ENCODE measurements at regions of chr5 and their contacts with region 1.

Region 1: DNA sequence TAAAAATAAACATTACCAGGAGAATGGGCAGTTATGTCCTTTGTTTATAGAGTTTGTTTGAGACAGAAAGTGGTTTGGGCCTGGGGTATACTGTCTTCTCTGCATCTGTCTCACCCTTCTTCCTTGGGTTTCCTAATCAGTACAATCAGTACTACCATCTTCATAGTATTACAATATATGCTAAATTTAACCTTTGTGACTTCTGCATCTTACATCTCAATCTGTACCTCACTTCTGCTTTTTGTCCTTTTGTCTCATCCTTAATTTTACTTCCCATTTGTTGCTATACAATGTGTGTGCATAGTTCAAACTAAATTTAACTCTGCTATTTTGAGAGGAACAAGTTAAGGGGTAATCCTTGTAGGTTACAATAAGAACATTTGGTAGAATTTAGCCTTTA is 19.6 kb downstream of the FBXO38 start:
- DNase-seq: no peak
- ATAC-seq: peak; percentile 72
- H3K4me3 ChIP-seq: no peak overlapping the region
- H3K27ac ChIP-seq: no peak overlapping the region
- H3K4me1 ChIP-seq: peaks cover 7% of the 10 kb centered on the region
- H3K27me3 ChIP-seq: no peaks in the 10 kb centered on the region
- CTCF ChIP-seq: no peak
- EP300 ChIP-seq: no peak
- POLR2A ChIP-seq: no peak
- RAD21 ChIP-seq: no peak

Region 2: DNA sequence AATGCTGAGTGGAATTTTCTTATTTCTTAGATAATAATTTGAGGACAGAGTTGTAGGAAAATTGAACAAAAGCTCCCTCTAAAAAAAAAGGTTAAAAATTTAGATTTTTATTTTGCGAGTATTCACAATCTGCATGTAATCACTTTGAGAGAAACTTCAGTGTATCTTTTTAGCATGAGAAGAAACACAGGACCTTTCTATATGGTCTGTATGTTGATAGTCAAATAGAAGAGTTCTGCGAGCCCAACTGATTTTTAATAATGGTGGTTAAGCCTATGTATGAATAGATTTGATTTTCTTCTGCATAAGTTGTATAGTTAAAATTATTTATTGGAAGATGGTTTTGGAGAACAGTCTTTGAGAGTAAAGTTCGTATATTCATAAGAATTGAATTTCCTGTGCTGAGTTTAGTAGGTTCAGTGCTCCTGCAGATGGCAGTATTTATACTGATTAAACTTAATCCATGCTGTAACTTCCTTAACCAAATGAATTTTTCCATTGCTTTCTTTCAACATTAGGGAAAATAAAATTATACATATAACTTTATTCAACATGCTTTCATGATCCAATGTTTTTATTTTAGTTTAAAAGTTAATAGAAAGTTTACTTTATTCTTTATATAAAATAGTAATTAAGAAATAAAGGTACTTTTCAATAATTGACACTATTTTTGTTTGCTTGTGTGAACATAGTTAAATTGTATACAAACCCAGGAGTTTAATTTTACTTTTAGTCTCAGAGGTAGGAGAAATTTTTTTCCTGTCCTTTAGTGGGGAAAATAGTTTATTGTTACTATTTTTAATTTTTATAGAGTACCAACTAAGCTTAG is 1936.6 kb before region 1 on chr5:
- CTCF ChIA-PET with region 1: no interaction called
- POLR2A ChIA-PET with region 1: no interaction called
- RAD21 ChIA-PET with region 1: no interaction called
- SMC1A ChIA-PET with region 1: no interaction called
- in situ Hi-C with region 1: loop called (anchors 25 kb)
- intact Hi-C with region 1: no loop called
- DNase-seq: no peak
- ATAC-seq: peak; percentile 63
- H3K4me3 ChIP-seq: no peak overlapping the region
- H3K27ac ChIP-seq: no peak overlapping the region
- H3K4me1 ChIP-seq: no peaks in the 10 kb centered on the region
- H3K27me3 ChIP-seq: no peaks in the 10 kb centered on the region
- CTCF ChIP-seq: peak; percentile 10 to 34 (median 12); a peak in 1 of 6 replicates
- EP300 ChIP-seq: no peak
- POLR2A ChIP-seq: no peak
- RAD21 ChIP-seq: no peak

Region 3: DNA sequence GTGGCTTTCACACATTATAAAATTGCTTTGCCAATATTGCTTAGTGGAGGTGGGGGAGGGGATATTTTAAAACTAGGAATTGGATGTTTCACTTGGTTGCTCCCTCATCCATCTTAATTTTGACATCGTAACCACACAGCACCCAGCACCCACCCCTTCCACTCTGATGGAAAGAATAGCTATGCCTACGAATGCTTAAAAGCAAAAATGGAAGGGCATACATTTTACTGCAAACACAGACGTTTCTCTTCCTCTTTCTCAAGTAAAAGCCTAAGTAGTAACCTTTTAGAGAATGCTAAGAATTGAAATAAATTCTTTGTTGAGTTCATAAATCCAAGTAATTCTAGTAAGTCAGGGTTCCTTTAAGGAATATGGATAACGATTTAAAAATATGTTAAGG is 690.7 kb before region 1 on chr5:
- CTCF ChIA-PET with region 1: no interaction called
- POLR2A ChIA-PET with region 1: no interaction called
- RAD21 ChIA-PET with region 1: no interaction called
- SMC1A ChIA-PET with region 1: no interaction called
- in situ Hi-C with region 1: no loop called
- intact Hi-C with region 1: no loop called
- DNase-seq: no peak
- ATAC-seq: no peak
- H3K4me3 ChIP-seq: no peak overlapping the region
- H3K27ac ChIP-seq: no peak overlapping the region
- H3K4me1 ChIP-seq: no peaks in the 10 kb centered on the region
- H3K27me3 ChIP-seq: no peaks in the 10 kb centered on the region
- CTCF ChIP-seq: no peak
- EP300 ChIP-seq: no peak
- POLR2A ChIP-seq: no peak
- RAD21 ChIP-seq: no peak